ENCODE measurements at regions of chr7 and their contacts with region 1.

Region 1: GRCh38 chr7:74502181-74502891 is 48.6 kb downstream of the GTF2IRD1 start:
- ATAC-seq: no peak
- H3K4me3 ChIP-seq: no peak overlapping the region
- H3K27ac ChIP-seq: no peak overlapping the region
- H3K4me1 ChIP-seq: no peaks in the 10 kb centered on the region

Region 2: DNA sequence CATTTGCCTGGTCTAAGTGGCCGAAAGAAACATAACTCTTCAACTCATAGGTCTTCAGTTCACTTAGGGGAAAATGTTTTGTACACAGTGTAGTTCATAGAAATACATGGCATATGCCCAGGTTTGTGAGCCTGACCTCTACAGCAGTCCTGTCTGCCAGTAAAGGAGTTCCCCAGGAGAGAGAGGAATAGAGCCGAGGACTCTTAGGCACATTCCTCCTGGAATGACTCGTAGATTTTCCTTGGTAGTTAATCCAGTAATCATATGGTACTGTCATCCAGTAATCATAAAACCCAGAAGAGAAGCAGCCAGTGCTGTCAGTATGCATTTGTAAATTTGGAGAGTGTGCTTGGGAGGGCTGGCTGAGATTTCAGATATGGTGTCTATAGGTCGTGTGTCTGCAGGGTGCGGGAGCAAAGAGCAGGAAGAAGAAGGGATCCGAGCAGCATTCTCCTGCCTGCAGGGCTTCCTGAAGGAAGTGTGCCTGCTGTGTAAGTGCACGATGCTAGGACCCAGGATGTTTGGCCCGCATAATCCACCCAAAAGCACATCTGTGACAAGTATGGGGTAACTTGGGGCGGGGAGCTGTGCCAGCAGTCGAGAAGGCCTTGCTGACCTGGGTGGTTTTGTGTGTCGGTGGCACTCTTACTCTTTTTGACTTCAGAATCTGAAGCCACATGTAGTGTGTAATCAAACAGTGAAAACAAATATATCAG is 314.3 kb before region 1 on chr7:
- in situ Hi-C with region 1: no loop called
- ATAC-seq: peak in 3 of 8 experiments; percentile 64 to 71 (median 69)
- H3K4me3 ChIP-seq: no peak overlapping the region
- H3K27ac ChIP-seq: no peak overlapping the region
- H3K4me1 ChIP-seq: peaks cover 0 to 2% of the 10 kb centered on the region in 2 donors

Region 3: DNA sequence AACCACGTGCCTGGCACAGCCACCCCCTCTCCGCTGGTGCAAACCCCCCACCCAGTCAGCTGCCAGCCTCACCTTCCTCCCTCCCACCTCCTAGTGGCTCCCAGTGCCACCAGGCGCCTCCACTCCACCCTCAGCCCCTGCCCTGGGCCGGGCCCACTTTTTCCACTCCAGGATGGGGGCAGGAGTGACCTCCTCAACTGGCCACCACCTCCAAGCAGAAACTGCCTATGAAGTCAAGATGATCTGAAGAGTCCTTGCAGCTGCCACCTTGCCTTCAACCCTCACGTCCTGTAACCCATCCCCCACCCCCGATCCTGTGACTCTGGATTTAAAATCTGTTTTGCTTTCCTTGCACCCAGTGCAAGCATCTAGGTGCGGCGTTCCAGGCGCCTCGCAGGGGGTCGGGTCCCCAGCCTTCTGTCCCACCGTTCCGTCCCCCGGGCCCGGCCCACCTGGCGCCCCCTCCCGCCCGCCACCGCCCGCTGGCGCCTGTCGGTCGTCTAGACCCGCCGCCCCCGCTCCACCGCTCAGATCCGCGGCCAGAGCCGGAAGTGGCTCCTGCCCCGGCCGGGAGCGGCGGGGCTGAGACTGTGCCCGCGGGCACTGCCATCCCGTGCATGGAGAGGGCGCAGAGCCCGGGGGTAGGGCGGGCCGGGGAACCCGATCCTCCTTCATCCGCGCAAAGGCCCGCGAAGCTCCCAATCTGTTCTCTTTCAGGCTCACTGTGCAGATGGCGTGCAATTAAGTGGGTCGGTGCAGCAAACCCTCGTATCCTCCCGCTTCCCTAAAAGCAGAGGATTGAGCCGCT is 104.0 kb after region 1 on chr7:
- in situ Hi-C with region 1: loop called in 1 of 9 experiments (anchors 25 kb)
- ATAC-seq: peak in 6 of 8 experiments; percentile 17 to 84 (median 48)
- H3K4me3 ChIP-seq: no peak overlapping the region
- H3K27ac ChIP-seq: no peak overlapping the region
- H3K4me1 ChIP-seq: no peaks in the 10 kb centered on the region

Measured in motor neuron (in vitro differentiated cells).